GM12878 (cell line): ENCODE measurements at regions of chr19 and their contacts with region 1.

Region 1: GRCh38 chr19:30682999-30683536 is 310.9 kb downstream of the ZNF536 start:
- DNase-seq: no peak
- ATAC-seq: peak; percentile 65
- H3K4me3 ChIP-seq: no peak overlapping the region
- H3K27ac ChIP-seq: no peak overlapping the region
- H3K4me1 ChIP-seq: no peaks in the 10 kb centered on the region
- H3K27me3 ChIP-seq: no peaks in the 10 kb centered on the region
- CTCF ChIP-seq: peak; percentile 80 to 86 (median 84)
- EP300 ChIP-seq: no peak
- POLR2A ChIP-seq: no peak
- RAD21 ChIP-seq: peak; percentile 85

Region 2: GRCh38 chr19:30621326-30621920 is 61.6 kb before region 1 on chr19:
- CTCF ChIA-PET with region 1: no interaction called
- POLR2A ChIA-PET with region 1: no interaction called
- RAD21 ChIA-PET with region 1: no interaction called
- SMC1A ChIA-PET with region 1: no interaction called
- in situ Hi-C with region 1: no loop called
- intact Hi-C with region 1: no loop called
- DNase-seq: no peak
- ATAC-seq: no peak
- H3K4me3 ChIP-seq: no peak overlapping the region
- H3K27ac ChIP-seq: no peak overlapping the region
- H3K4me1 ChIP-seq: no peaks in the 10 kb centered on the region
- H3K27me3 ChIP-seq: no peaks in the 10 kb centered on the region
- CTCF ChIP-seq: no peak
- EP300 ChIP-seq: no peak
- POLR2A ChIP-seq: no peak
- RAD21 ChIP-seq: no peak

Region 3: DNA sequence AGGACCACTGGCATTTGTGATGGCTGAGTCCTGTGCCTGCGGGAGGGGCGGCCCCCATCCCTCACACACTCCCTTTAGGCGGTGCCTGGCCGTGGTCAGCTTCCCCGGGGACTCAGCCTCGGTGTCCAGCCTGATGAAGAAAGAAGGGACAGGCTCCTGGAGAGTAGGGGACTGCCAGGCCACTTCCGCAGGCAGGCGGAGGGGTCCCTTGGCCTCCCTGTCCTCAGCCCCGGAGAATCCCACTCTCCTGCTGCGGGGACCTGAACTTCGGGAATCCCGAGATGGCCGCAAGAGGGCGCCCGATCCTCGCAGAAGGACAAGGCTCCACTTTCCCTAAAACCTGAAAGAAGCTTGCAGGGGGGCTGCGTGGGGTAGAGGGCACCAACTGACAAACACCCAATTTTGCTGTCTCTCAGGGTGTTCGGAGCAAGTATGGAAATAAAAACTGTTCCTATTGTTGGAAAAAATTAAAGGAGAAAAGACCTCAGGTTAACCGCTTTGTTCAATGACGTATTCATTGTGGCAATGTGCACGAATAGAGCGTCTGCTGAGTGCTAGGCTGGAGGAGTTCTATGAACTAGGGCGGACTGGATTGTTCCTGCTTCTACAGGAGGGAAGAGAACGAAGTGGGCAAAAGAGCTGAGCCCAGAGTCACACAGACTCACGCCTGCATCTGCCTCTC is 13.6 kb before region 1 on chr19:
- CTCF ChIA-PET with region 1: interaction called, 24 read pairs
- POLR2A ChIA-PET with region 1: no interaction called
- RAD21 ChIA-PET with region 1: interaction called, 5 read pairs
- SMC1A ChIA-PET with region 1: interaction called, 4 read pairs
- in situ Hi-C with region 1: no loop called
- intact Hi-C with region 1: no loop called
- DNase-seq: no peak
- ATAC-seq: peak; percentile 63
- H3K4me3 ChIP-seq: no peak overlapping the region
- H3K27ac ChIP-seq: no peak overlapping the region
- H3K4me1 ChIP-seq: no peaks in the 10 kb centered on the region
- H3K27me3 ChIP-seq: no peaks in the 10 kb centered on the region
- CTCF ChIP-seq: peak; percentile 64 to 68 (median 65)
- EP300 ChIP-seq: no peak
- POLR2A ChIP-seq: no peak
- RAD21 ChIP-seq: peak; percentile 57

Region 4: GRCh38 chr19:32224371-32225244 is 1541.5 kb after region 1 on chr19:
- CTCF ChIA-PET with region 1: interaction called, 7 read pairs
- POLR2A ChIA-PET with region 1: no interaction called
- RAD21 ChIA-PET with region 1: interaction called, 3 read pairs
- SMC1A ChIA-PET with region 1: interaction called, 6 read pairs
- in situ Hi-C with region 1: no loop called
- intact Hi-C with region 1: loop called (anchors 1 kb)
- DNase-seq: no peak
- ATAC-seq: peak; percentile 85
- H3K4me3 ChIP-seq: no peak overlapping the region
- H3K27ac ChIP-seq: no peak overlapping the region
- H3K4me1 ChIP-seq: no peaks in the 10 kb centered on the region
- H3K27me3 ChIP-seq: no peaks in the 10 kb centered on the region; a peak in 1 of 4 replicates
- CTCF ChIP-seq: peak; percentile 81 to 92 (median 91); a peak in 5 of 6 replicates
- EP300 ChIP-seq: no peak
- POLR2A ChIP-seq: no peak
- RAD21 ChIP-seq: peak; percentile 61

Region 5: DNA sequence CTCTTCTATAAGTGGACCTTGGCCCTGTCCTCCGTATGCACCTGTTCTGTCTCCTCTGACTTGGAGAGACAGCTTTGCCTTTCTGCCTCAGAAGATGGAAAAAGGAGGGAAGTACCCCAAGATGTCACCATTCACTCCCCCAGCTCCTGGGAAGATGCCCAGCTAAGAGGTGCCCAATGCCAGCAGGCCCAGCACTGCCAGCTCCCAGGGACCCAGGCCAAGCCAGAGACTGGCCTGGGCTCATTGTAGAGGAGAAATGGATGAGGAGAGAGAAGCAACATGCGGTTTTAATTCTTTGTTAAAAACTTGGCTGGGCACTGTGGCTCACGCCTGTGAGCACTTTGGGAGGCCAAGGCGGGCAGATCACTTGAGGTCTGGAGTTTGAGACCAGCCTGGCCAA is 1550.8 kb after region 1 on chr19:
- CTCF ChIA-PET with region 1: no interaction called
- POLR2A ChIA-PET with region 1: no interaction called
- RAD21 ChIA-PET with region 1: no interaction called
- SMC1A ChIA-PET with region 1: no interaction called
- in situ Hi-C with region 1: loop called (anchors 5 kb)
- intact Hi-C with region 1: no loop called
- DNase-seq: no peak
- ATAC-seq: no peak
- H3K4me3 ChIP-seq: no peak overlapping the region
- H3K27ac ChIP-seq: no peak overlapping the region
- H3K4me1 ChIP-seq: no peaks in the 10 kb centered on the region
- H3K27me3 ChIP-seq: no peaks in the 10 kb centered on the region
- CTCF ChIP-seq: no peak
- EP300 ChIP-seq: no peak
- POLR2A ChIP-seq: no peak
- RAD21 ChIP-seq: no peak